Caco-2 (cell line): ENCODE measurements at regions of chr6 and their contacts with region 1.

Region 1: GRCh38 chr6:154156135-154156896 is 117.3 kb downstream of the OPRM1 start:
- DNase-seq: peak; percentile 36 to 55
- H3K4me3 ChIP-seq: no peak overlapping the region
- H3K4me3 Mint-ChIP-seq: no peak overlapping the region
- H3K27ac Mint-ChIP-seq: no peak overlapping the region
- H3K4me1 ChIP-seq: no peaks in the 10 kb centered on the region
- H3K4me1 Mint-ChIP-seq: no peaks in the 10 kb centered on the region
- H3K27me3 ChIP-seq: no peaks in the 10 kb centered on the region
- H3K27me3 Mint-ChIP-seq: no peaks in the 10 kb centered on the region
- CTCF ChIP-seq: peak; percentile 41 to 65

Region 2: DNA sequence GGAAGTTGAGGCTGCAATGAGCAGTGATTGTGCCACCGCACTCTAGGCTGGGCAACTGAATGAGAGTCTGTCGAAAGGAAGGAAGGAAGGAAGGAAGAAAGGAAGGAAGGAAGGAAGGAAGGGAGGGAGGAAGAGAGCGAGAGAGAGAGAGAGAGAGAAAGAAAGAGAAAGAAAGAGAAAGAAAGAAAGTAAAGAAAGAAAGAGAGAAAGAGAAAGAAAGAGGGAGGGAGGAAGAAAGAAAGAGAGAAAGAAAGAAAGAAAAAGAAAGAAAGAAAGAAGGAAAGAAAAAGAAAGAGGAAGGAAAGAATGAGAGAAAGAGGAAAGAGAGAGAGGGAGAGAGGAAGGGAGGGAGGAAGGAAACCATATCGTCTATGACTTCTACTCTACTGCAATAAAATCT is 57.1 kb before region 1 on chr6:
- CTCF ChIA-PET with region 1: no interaction called
- POLR2A ChIA-PET with region 1: no interaction called
- intact Hi-C with region 1: no loop called
- DNase-seq: no peak
- H3K4me3 ChIP-seq: no peak overlapping the region
- H3K4me3 Mint-ChIP-seq: no peak overlapping the region
- H3K27ac Mint-ChIP-seq: no peak overlapping the region
- H3K4me1 ChIP-seq: no peaks in the 10 kb centered on the region
- H3K4me1 Mint-ChIP-seq: no peaks in the 10 kb centered on the region
- H3K27me3 ChIP-seq: no peaks in the 10 kb centered on the region
- H3K27me3 Mint-ChIP-seq: peaks cover 8% of the 10 kb centered on the region
- CTCF ChIP-seq: no peak

Region 3: GRCh38 chr6:154276810-154277628 is 120.7 kb after region 1 on chr6:
- CTCF ChIA-PET with region 1: interaction called, 12 read pairs
- POLR2A ChIA-PET with region 1: no interaction called
- intact Hi-C with region 1: loop called (anchors 1 kb)
- DNase-seq: no peak
- H3K4me3 ChIP-seq: no peak overlapping the region
- H3K4me3 Mint-ChIP-seq: peak overlapping the region; percentile 40
- H3K27ac Mint-ChIP-seq: no peak overlapping the region
- H3K4me1 ChIP-seq: no peaks in the 10 kb centered on the region
- H3K4me1 Mint-ChIP-seq: no peaks in the 10 kb centered on the region
- H3K27me3 ChIP-seq: no peaks in the 10 kb centered on the region
- H3K27me3 Mint-ChIP-seq: no peaks in the 10 kb centered on the region
- CTCF ChIP-seq: peak; percentile 25 to 46